BJ (cell line): ENCODE measurements at regions of chr13 and their contacts with region 1.

Region 1: GRCh38 chr13:45280751-45281634 is 60.0 kb downstream of the TPT1 start:
- DNase-seq: no peak
- H3K4me3 ChIP-seq: no peak overlapping the region
- H3K27me3 ChIP-seq: no peaks in the 10 kb centered on the region
- CTCF ChIP-seq: peak; percentile 92

Region 2: DNA sequence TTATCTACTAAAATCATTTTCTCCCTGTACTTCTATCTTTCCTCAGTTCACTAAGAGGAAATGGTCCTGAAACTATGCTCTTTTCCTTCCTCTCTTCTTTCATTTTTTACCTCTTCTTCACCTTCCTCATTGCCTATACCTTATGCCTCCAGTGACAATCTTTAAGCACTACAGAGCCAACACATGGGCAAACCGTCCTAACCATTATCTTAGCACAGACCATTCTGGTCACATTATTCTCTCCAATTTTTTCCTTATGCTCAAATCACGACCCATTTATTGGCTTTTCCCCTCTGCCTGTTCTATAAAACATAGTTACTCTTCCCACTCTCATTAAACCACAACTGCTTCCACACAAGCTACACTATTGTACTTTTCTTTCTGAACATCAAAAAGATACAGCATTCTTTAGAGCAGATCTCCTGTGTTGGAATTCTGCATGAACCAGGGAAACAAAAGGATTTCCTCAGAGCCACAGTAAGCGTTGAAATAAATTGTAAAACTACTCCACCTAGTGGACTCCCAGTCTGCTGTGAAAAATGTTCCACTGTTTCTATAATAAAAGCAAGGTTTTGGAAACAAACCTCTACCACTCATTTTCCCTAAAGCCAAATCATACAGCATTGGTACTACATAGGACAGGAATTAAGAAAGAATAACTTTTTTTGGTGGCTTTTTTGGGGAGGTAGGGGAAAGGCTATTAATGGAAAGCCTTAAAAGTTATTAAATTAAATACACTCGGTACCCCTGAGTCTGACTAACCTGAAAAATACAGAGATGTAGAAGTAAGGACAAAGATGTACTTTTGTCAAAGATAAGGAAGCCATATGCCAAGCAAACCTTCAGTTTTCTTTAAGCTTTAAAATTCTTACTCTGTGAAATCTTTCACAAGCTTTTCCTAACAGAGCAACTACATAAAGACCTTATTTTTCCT is 311.2 kb before region 1 on chr13:
- CTCF ChIA-PET with region 1: interaction called, 5 read pairs
- POLR2A ChIA-PET with region 1: interaction called, 11 read pairs
- DNase-seq: no peak
- H3K4me3 ChIP-seq: no peak overlapping the region
- H3K27me3 ChIP-seq: no peaks in the 10 kb centered on the region
- CTCF ChIP-seq: peak; percentile 70

Region 3: DNA sequence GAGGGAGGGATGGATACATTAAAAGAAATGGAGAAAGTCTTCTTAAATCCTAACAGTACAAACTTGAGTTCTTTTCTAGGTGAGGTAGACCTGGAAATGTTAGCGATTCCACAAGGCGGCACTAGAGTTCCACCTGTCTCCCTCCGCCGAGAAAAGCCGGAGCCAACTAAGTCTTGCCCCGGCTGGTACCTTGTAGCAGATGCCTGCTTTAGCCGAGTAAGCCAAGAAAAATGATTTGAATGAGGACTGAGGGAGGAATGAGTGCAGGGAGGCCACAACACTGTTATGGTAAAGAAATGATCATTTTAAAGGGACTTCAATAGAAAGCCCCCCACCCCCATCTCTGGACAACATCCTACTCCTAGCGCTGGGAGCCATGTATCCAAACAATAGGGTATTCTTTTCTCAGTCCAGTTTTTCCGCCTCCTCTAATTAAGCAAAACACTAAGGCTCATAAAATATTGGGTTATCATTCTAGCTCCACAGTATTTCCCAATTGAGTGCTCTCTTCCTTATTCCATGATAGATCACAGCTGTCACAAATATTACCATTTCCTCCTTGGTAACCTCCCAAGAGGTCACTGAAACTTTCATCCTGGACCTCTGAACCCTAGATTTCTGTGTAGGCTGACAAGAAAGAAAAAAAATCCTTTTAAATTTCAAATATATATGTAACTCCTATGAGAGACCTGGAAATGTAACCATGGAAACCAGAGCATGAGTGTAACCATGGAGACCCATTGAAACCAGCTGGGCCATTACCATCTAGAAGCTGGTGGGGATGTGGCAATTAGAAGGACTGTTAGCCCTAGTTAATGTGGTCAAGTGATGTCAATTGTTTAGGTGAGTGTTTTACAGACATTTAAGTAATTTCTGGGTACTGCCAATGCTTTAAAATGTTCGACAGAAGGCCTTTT is 233.3 kb before region 1 on chr13:
- CTCF ChIA-PET with region 1: interaction called, 93 read pairs
- POLR2A ChIA-PET with region 1: interaction called, 8 read pairs
- DNase-seq: no peak
- H3K4me3 ChIP-seq: peak overlapping the region; percentile 50
- H3K27me3 ChIP-seq: no peaks in the 10 kb centered on the region; the same call in 1 of the 2 replicates
- CTCF ChIP-seq: peak; percentile 93

Region 4: DNA sequence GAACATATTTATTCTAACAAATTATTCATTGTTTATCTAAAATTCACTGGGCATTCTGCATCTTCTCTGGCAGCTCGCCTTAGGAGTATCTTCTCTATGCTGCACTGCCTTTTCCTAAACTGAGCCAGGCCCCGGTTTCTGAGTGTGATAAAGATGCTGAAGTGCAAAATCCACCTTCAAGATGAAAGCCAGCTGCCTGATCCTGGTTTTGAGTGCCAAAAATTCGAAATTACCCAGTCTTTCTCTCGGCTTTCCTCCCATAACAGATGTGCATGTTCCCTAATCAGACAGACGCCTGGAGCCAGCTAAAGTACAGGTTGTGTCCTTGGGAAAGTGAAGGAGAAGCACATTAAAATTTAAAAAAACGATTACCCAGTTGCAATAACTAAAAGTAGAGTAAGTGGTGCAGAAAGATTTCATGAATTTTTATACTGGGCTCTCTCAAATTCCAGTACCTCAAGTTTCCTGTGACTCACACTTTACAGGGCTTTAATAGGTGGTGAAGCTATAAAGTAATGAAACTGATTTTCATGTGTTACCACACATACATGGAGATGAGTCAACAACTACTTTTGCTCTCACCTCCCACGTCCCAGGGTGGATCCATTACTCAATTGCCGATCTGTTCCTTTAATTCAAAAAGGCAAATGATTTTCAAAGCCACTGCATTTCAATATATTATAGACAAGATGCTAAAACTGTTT is 225.6 kb before region 1 on chr13:
- CTCF ChIA-PET with region 1: interaction called, 14 read pairs
- POLR2A ChIA-PET with region 1: no interaction called
- DNase-seq: peak; percentile 94
- H3K4me3 ChIP-seq: no peak overlapping the region
- H3K27me3 ChIP-seq: no peaks in the 10 kb centered on the region
- CTCF ChIP-seq: no peak

Region 5: GRCh38 chr13:45162821-45163220 is 118.2 kb before region 1 on chr13:
- CTCF ChIA-PET with region 1: interaction called, 4 read pairs
- POLR2A ChIA-PET with region 1: interaction called, 31 read pairs
- DNase-seq: peak; percentile 72
- H3K4me3 ChIP-seq: no peak overlapping the region
- H3K27me3 ChIP-seq: no peaks in the 10 kb centered on the region
- CTCF ChIP-seq: no peak

Region 6: DNA sequence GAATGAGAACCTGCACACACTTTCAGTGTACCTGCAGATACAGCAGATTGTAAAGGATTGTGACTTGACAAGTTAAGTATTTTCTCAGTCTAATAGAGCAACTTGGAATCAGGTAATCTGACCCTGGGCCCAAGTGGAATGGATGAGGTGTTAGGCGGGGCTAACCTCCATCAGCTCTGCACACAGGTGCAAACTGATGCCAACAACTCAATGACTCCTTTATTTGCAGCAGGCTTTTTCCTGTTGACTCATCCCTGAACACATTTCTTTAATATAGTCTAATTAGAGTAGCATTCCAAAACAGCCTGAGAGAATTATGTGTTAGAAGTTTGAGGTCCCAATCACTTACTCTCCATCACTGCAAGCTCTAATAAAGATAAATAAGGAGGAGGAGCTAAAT is 11.2 kb after region 1 on chr13:
- CTCF ChIA-PET with region 1: interaction called, 39 read pairs
- POLR2A ChIA-PET with region 1: no interaction called
- DNase-seq: no peak
- H3K4me3 ChIP-seq: no peak overlapping the region
- H3K27me3 ChIP-seq: no peaks in the 10 kb centered on the region
- CTCF ChIP-seq: no peak

Region 7: GRCh38 chr13:45310341-45311125 is 29.5 kb after region 1 on chr13:
- CTCF ChIA-PET with region 1: interaction called, 21 read pairs
- POLR2A ChIA-PET with region 1: no interaction called
- DNase-seq: no peak
- H3K4me3 ChIP-seq: no peak overlapping the region; the same call in 1 of the 2 replicates
- H3K27me3 ChIP-seq: no peaks in the 10 kb centered on the region; the same call in 1 of the 2 replicates
- CTCF ChIP-seq: no peak

Region 8: GRCh38 chr13:45332036-45332830 is 51.2 kb after region 1 on chr13:
- CTCF ChIA-PET with region 1: no interaction called
- POLR2A ChIA-PET with region 1: no interaction called
- DNase-seq: peak; percentile 91
- H3K4me3 ChIP-seq: no peak overlapping the region
- H3K27me3 ChIP-seq: no peaks in the 10 kb centered on the region
- CTCF ChIP-seq: no peak